Calu3 (cell line): ENCODE measurements at regions of chr7 and their contacts with region 1.

Region 1: GRCh38 chr7:83936056-83936708 is 258.4 kb downstream of the SEMA3A start:
- DNase-seq: peak; percentile 56
- H3K4me3 Mint-ChIP-seq: no peak overlapping the region
- H3K27ac Mint-ChIP-seq: no peak overlapping the region
- H3K4me1 Mint-ChIP-seq: peaks cover 6% of the 10 kb centered on the region
- H3K27me3 Mint-ChIP-seq: no peaks in the 10 kb centered on the region
- CTCF ChIP-seq: peak; percentile 57

Region 2: DNA sequence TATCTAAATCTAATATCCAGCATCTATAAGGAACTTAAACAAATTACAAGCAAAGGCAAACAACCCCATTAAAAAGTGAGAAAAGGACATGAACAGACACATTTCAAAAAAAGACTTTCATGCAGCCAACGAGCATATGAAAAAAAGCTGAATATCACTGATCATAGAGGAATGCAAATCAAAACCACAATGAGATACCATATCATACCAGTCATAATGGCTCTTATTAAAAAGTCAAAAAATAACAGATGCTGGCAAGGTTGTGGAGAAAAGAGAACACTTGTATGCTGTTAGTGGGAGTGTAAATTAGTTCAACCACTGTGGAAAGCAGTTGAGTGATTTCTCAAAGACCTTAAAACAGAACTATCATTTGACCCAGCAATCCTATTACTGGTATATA is 1158.2 kb before region 1 on chr7:
- CTCF ChIA-PET with region 1: no interaction called
- intact Hi-C with region 1: no loop called
- DNase-seq: no peak
- H3K4me3 Mint-ChIP-seq: no peak overlapping the region
- H3K27ac Mint-ChIP-seq: no peak overlapping the region
- H3K4me1 Mint-ChIP-seq: no peaks in the 10 kb centered on the region
- H3K27me3 Mint-ChIP-seq: no peaks in the 10 kb centered on the region
- CTCF ChIP-seq: no peak

Region 3: DNA sequence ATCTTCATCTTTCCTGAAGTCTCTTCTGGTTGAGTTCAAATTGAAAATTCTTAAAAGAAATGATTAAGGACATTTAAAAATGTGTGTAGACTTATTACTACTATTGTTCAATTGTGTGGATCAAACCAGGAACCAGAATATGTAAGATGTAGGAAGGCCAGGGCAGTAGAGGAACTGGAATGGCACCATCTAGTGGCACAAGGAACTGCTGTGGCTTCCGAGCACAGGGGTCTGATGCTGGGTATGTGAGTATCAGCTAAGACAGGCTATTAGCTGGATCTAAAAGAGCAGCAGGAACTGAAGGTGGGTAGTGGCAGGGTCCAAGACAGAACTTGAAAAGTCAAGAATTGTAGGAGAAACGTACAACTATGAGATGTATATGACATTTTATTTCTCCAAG is 11.1 kb after region 1 on chr7:
- CTCF ChIA-PET with region 1: no interaction called
- intact Hi-C with region 1: no loop called
- DNase-seq: peak; percentile 4
- H3K4me3 Mint-ChIP-seq: no peak overlapping the region
- H3K27ac Mint-ChIP-seq: no peak overlapping the region
- H3K4me1 Mint-ChIP-seq: no peaks in the 10 kb centered on the region
- H3K27me3 Mint-ChIP-seq: no peaks in the 10 kb centered on the region
- CTCF ChIP-seq: peak; percentile 16

Region 4: GRCh38 chr7:84455788-84456187 is 519.6 kb after region 1 on chr7:
- CTCF ChIA-PET with region 1: no interaction called
- intact Hi-C with region 1: loop called (anchors 10 kb)
- DNase-seq: no peak
- H3K4me3 Mint-ChIP-seq: no peak overlapping the region
- H3K27ac Mint-ChIP-seq: no peak overlapping the region
- H3K4me1 Mint-ChIP-seq: no peaks in the 10 kb centered on the region
- H3K27me3 Mint-ChIP-seq: no peaks in the 10 kb centered on the region
- CTCF ChIP-seq: no peak